Activated naive CD4-positive, alpha-beta T cell treated with anti-CD3 and anti-CD28 coated beads, Interleukin-2, amount 10 ng/mL, durations not matched to agents 7 days and 5 days (primary cell): ENCODE measurements at regions of chr10 and their contacts with region 1.

Region 1: GRCh38 chr10:96229568-96230030 is 41.8 kb downstream of the BLNK start:
- DNase-seq: peak; percentile 77
- H3K4me3 Mint-ChIP-seq: no peak overlapping the region
- H3K27ac Mint-ChIP-seq: peak overlapping the region; percentile 24
- H3K4me1 Mint-ChIP-seq: no peaks in the 10 kb centered on the region
- H3K27me3 Mint-ChIP-seq: peaks cover 4% of the 10 kb centered on the region

Region 2: DNA sequence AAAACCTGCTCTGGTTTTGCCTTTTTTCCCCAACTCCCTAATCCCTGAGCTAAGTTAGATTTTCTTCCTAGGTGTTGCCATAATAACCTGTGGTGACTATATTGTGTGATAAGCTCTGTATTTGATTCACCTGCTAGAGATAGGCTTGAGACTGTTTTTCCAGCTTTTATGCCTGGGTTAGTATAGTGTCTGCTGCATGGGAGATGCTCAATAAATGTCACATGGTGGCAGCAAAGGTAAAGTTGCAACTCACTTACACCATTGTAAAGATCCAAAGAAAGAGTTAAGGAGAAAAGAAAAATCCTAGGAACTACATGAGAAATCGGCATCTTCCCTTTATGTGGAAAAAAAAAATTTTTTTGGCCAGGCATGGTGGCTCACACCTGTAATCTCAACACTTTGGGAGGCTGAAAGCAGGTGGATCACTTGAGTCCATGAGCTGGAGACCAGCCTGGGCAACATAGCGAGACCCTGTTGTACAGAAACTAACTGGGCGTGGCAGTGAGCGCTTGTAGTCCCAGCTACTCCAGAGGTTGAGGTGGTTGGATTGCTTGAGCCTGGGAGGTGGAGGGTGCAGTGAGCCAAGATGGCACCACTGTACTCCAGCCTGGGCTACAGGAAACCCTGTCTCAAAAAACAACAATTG is 182.5 kb before region 1 on chr10:
- CTCF ChIA-PET with region 1: interaction called, 12 read pairs
- DNase-seq: no peak
- H3K4me3 Mint-ChIP-seq: no peak overlapping the region
- H3K27ac Mint-ChIP-seq: no peak overlapping the region
- H3K4me1 Mint-ChIP-seq: peaks cover 48% of the 10 kb centered on the region
- H3K27me3 Mint-ChIP-seq: no peaks in the 10 kb centered on the region

Region 3: GRCh38 chr10:96061232-96061631 is 168.4 kb before region 1 on chr10:
- CTCF ChIA-PET with region 1: no interaction called
- DNase-seq: no peak
- H3K4me3 Mint-ChIP-seq: no peak overlapping the region
- H3K27ac Mint-ChIP-seq: no peak overlapping the region
- H3K4me1 Mint-ChIP-seq: peaks cover 17% of the 10 kb centered on the region
- H3K27me3 Mint-ChIP-seq: no peaks in the 10 kb centered on the region

Region 4: GRCh38 chr10:96292971-96293920 is 63.6 kb after region 1 on chr10:
- CTCF ChIA-PET with region 1: interaction called, 135 read pairs
- DNase-seq: no peak
- H3K4me3 Mint-ChIP-seq: no peak overlapping the region
- H3K27ac Mint-ChIP-seq: no peak overlapping the region
- H3K4me1 Mint-ChIP-seq: peaks cover 9% of the 10 kb centered on the region
- H3K27me3 Mint-ChIP-seq: peaks cover 3% of the 10 kb centered on the region

Region 5: DNA sequence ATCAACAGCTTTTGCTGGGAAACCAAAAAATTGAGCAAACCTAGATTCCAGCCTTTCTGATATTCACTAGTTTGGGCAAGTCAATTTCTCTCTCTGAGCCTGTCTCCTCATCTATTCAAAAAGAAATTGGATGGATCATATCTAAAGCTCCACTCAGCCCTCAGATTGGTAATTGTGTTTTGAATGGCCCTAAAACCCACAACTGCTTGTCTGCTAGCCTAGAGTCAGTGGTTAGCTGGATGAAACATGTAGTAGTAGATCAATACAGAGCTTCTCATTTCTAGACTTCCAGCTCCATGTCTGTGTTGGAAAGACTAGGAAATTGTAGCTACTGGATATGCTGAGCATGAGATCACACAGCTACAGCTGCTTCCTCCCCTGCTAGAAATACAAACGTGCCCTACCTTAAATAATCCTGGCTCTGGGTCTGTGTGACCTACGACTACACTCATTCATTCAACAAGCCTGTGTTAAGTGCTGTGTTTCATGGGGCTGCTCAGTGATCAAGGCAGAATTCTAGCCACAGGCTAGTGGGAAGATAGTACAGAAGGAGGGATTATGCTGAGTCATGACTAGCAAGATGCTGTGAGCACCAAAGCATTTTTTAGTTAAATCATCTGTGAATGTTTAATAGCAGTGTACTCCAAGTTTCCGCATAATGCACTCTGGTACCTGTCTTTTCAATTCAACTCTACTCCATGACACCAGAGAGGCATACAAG is 90.3 kb after region 1 on chr10:
- CTCF ChIA-PET with region 1: interaction called, 11 read pairs
- DNase-seq: no peak
- H3K4me3 Mint-ChIP-seq: no peak overlapping the region
- H3K27ac Mint-ChIP-seq: no peak overlapping the region
- H3K4me1 Mint-ChIP-seq: no peaks in the 10 kb centered on the region
- H3K27me3 Mint-ChIP-seq: peaks cover 11% of the 10 kb centered on the region

Region 6: GRCh38 chr10:96413151-96413787 is 183.7 kb after region 1 on chr10:
- CTCF ChIA-PET with region 1: no interaction called
- DNase-seq: no peak
- H3K4me3 Mint-ChIP-seq: no peak overlapping the region
- H3K27ac Mint-ChIP-seq: no peak overlapping the region
- H3K4me1 Mint-ChIP-seq: no peaks in the 10 kb centered on the region
- H3K27me3 Mint-ChIP-seq: no peaks in the 10 kb centered on the region